GM18951 (cell line): ENCODE measurements at regions of chrX and their contacts with region 1.

Region 1: GRCh38 chrX:70096052-70096451 is 33.8 kb downstream of the OTUD6A start:
- POLR2A ChIP-seq: no peak

Region 2: DNA sequence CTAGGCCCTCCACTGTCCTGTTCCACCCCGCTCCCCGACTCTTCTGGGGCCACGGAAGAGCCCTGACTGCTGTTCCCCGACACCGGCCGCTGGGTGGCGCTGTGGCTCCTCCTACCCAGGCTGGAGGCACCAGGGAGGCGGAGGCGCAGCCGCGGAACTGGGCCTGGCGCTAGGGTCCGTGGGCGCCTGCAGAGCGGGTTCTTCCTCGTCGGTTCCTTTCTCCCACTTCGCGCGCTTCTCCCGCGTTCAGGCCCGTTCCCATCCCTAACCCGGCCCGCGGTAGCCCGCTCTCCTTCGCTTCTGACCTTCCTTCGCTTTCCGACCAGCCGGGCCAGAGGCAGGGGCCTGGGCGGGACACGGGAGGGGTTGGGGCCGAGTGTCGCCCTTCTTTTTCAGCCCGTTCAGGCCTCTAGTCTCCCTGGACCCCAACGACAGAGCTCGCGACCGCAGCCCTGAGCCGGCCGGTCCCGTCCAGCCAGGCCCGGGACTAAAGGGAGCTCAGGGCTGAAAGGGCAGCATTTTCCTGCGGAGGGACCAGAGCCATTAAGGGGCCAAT is 557.7 kb before region 1 on chrX:
- in situ Hi-C with region 1: loop called (anchors 25 kb)
- POLR2A ChIP-seq: no peak

Region 3: DNA sequence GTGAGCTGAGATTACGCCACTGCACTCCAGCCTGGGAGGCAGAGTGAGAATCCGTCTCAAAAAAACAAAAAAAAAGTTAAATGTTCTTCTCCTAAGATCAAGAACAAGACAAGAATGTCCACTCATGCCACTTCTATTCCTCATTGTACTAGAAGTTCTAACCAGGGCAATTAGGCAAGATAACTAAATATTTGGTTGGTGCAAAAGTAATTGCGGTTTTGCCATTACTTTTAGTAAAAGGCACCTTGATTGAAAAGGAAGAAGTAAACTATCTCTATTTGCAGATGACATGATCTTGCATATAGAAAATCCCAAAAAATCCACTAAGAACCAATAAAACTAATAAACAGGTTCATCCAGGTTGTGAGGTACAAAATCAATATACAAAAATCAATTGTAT is 858.8 kb after region 1 on chrX:
- in situ Hi-C with region 1: no loop called
- POLR2A ChIP-seq: no peak